ENCODE measurements at regions of chr1 and their contacts with region 1.

Region 1: DNA sequence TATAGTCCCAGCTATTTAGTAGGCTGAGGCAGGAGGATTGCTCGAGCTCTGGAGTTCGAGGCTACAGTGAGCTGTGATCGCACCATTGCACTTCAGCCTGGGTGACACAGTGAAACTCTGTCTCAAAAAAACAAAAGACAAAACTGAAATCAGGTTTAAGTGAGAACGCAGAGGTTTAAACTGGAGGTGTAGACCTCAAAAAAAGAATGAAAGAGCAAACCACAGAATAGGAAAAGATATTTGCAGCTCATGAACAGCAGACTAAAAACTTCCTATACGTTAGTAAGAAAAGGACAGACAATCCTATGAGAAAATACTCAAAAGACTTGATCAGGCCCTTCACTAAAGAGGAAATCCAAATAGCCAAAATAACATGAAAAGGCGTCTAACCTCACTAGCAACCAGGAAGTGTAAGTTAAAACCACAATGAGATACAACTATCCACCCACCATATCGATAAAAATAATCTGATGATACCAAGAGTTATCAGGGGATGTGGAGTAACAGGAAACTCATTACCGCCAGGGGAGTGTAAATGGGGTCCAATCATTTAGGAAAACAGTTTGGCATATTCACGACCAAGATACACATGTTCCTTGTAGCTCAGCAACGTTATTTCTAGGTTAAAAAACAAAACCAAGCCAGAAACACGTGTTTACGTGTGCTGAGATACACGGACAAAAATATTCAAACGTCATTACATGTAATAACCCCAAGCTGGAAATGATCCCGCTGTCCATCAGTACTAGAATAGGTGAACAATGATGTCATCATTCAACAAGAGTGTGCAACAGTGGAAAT is 9.8 kb downstream of the TNFRSF9 start:
- DNase-seq: peak; percentile 45
- H3K4me3 Mint-ChIP-seq: peak overlapping the region; percentile 43
- H3K27ac Mint-ChIP-seq: peak overlapping the region; percentile 88
- H3K4me1 Mint-ChIP-seq: peaks cover 34% of the 10 kb centered on the region
- H3K27me3 Mint-ChIP-seq: no peaks in the 10 kb centered on the region

Region 2: DNA sequence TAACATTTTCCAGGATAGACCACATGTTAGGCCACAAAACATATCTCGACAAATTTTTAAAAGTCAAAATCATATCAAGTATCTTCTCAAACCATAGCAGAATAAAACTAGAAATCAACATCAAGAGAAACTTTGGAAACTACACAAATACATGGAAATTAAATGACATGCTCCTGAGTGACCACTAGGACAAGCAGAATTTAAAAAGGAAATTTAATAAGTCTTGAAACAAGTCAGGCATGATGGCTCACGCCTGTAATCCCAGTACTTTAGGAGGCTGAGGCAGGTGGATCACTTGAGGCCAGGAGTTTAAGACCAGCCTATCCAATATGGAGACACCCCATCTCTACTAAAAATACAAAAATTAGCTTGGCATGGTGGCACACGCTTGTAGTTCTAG is 51.6 kb before region 1 on chr1:
- CTCF ChIA-PET with region 1: no interaction called
- POLR2A ChIA-PET with region 1: no interaction called
- intact Hi-C with region 1: no loop called
- DNase-seq: no peak
- H3K4me3 Mint-ChIP-seq: no peak overlapping the region
- H3K27ac Mint-ChIP-seq: no peak overlapping the region
- H3K4me1 Mint-ChIP-seq: no peaks in the 10 kb centered on the region
- H3K27me3 Mint-ChIP-seq: peaks cover 7% of the 10 kb centered on the region

Region 3: DNA sequence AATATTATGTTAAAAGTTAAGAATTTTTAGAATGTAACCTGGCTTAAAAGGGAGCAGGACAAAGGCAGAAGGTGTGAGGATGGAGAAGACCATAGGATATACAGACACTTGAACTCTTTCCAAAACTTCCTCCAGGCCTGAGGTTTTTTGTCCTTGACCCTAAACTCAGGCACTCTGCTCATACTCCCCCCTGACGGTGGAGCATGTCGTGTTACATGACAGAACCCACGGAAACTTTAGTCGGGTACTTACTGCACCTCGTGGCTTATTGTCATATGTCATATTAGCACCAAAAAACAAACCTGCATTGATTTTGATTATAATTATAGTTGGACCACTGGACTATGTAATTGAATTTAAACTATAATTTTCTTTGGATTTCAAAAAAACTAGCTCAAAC is 11.0 kb before region 1 on chr1:
- CTCF ChIA-PET with region 1: no interaction called
- POLR2A ChIA-PET with region 1: interaction called, 7 read pairs
- intact Hi-C with region 1: loop called (anchors 1 kb)
- DNase-seq: no peak
- H3K4me3 Mint-ChIP-seq: no peak overlapping the region
- H3K27ac Mint-ChIP-seq: no peak overlapping the region
- H3K4me1 Mint-ChIP-seq: peaks cover 36% of the 10 kb centered on the region
- H3K27me3 Mint-ChIP-seq: no peaks in the 10 kb centered on the region

Region 4: GRCh38 chr1:7942214-7942921 is 11.5 kb after region 1 on chr1:
- CTCF ChIA-PET with region 1: interaction called, 10 read pairs
- POLR2A ChIA-PET with region 1: interaction called, 12 read pairs
- intact Hi-C with region 1: loop called (anchors 1 kb)
- DNase-seq: peak; percentile 58
- H3K4me3 Mint-ChIP-seq: peak overlapping the region; percentile 44
- H3K27ac Mint-ChIP-seq: peak overlapping the region; percentile 80
- H3K4me1 Mint-ChIP-seq: peaks cover 46% of the 10 kb centered on the region
- H3K27me3 Mint-ChIP-seq: peaks cover 9% of the 10 kb centered on the region

Region 5: GRCh38 chr1:7948960-7949359 is 18.1 kb after region 1 on chr1:
- CTCF ChIA-PET with region 1: interaction called, 4 read pairs
- POLR2A ChIA-PET with region 1: interaction called, 15 read pairs
- intact Hi-C with region 1: loop called (anchors 1 kb)
- DNase-seq: peak; percentile 44
- H3K4me3 Mint-ChIP-seq: peak overlapping the region; percentile 27
- H3K27ac Mint-ChIP-seq: peak overlapping the region; percentile 84
- H3K4me1 Mint-ChIP-seq: peaks cover 29% of the 10 kb centered on the region
- H3K27me3 Mint-ChIP-seq: no peaks in the 10 kb centered on the region

Region 6: DNA sequence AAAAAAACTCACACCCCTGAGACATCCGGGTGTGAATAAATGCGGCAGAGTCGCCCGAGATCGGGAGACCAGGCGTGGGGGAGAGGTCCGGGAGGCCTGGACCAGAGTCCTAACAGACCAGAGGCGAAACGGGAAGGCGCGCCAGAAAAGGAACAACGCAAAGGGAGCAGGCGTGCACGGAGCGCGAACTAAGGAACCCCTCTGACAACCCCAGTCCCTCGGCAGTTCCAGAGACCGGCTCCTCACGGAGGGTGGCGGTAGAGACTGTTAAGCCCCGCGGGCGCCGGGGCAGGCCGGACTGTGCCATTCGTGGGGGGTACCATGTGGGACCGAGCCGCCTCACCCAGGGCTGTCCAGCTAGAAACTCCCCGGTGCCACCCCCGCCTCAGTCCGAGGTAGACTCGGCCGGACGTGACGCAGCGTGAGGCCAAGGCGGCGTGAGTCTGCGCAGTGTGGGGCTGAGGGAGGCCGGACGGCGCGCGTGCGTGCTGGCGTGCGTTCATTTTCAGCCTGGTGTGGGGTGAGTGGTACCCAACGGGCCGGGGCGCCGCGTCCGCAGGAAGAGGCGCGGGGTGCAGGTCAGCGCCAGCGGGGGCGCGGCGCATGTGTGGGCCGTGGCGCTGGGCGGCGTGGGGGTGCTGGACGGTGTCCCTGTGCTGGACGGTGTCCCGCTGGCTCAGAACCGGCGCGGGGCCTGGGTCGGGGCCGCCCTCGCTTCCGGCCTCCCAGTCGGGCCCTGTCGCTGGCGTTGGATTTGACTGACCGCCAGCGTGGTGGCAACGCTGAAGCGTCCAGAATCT is 30.6 kb after region 1 on chr1 and contains the start of gene PARK7:
- CTCF ChIA-PET with region 1: no interaction called
- POLR2A ChIA-PET with region 1: interaction called, 7 read pairs
- intact Hi-C with region 1: loop called (anchors 2 kb)
- DNase-seq: peak; percentile 100
- H3K4me3 Mint-ChIP-seq: peak within 1 kb of the TSS; percentile 93
- H3K27ac Mint-ChIP-seq: peak within 1 kb of the TSS; percentile 94
- H3K4me1 Mint-ChIP-seq: peaks cover 54% of the 10 kb centered on the region
- H3K27me3 Mint-ChIP-seq: no peaks in the 10 kb centered on the region
- total RNA-seq, gene PARK7: 429 to 457 TPM